IMR-90 (cell line): ENCODE measurements at regions of chr7 and their contacts with region 1.

Region 1: DNA sequence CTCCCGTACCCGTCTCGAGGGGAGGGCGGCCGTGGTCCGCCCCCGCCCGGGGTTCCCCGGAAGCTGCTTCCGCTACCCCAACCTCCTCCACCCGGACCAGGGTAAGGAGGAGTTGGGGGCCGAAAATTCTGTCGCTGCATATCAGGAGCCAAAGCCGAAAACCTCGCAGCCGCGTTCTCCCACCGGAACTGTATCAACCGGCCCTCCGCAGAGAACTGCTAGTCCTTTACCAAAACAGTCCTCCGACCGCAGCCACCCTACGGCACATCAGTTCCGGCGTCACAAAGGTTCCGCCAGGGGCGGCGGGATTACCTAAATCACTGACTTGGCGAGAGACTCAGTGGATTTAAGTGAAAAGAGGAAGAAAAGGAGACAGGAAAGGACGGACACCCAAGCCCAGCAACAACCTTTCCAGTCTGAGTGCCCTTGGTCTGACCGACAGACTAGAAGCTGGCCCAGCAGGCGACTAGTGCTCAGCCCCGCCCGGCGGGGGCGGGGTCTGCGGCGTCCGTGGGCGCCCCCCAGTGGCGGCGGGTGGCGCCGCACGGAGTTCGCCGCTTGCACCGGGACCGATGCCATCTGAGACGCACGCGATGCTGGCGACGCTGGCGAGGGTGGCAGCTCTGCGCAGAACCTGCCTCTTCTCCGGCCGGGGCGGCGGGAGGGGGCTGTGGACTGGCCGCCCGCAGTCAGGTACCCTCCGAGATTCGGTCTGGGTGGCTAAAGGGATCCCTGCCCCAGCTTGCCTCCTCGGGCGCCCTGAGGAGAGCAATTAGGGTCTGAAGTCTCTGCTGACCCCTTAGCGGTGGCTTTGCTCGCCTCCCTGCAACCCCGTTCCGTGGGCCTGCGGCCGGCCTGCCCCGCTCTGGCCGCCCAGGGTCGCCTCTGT is at the starts of genes MPLKIP and SUGCT:
- DNase-seq: peak; percentile 87
- ATAC-seq: peak; percentile 94
- H3K4me3 ChIP-seq: peak within 1 kb of the TSS; percentile 87
- H3K27ac ChIP-seq: peak within 1 kb of the TSS; percentile 87
- H3K4me1 ChIP-seq: no peaks in the 10 kb centered on the region
- H3K27me3 ChIP-seq: no peaks in the 10 kb centered on the region
- CTCF ChIP-seq: peak; percentile 97
- POLR2A ChIP-seq: peak; percentile 59; the same call in 1 of the 2 replicates
- RAD21 ChIP-seq: peak; percentile 41; the same call in 1 of the 2 replicates
- total RNA-seq, gene MPLKIP: 12.7 and 13.9 TPM in 2 replicates
- total RNA-seq, gene SUGCT: 5.9 and 7.5 TPM in 2 replicates

Region 2: GRCh38 chr7:39894904-39895303 is 239.8 kb before region 1 on chr7:
- CTCF ChIA-PET with region 1: interaction called, 5 read pairs
- POLR2A ChIA-PET with region 1: no interaction called
- dilution Hi-C with region 1: no loop called
- in situ Hi-C with region 1: no loop called
- intact Hi-C with region 1: loop called (anchors 2 kb)
- DNase-seq: peak; percentile 13
- ATAC-seq: 0 out of 2 replicates have a peak, but pooled peaks have one; percentile 24
- H3K4me3 ChIP-seq: no peak overlapping the region
- H3K27ac ChIP-seq: no peak overlapping the region
- H3K4me1 ChIP-seq: no peaks in the 10 kb centered on the region
- H3K27me3 ChIP-seq: peaks cover 51% of the 10 kb centered on the region
- CTCF ChIP-seq: no peak
- POLR2A ChIP-seq: no peak
- RAD21 ChIP-seq: no peak

Region 3: GRCh38 chr7:39904077-39904486 is 230.6 kb before region 1 on chr7:
- CTCF ChIA-PET with region 1: no interaction called
- POLR2A ChIA-PET with region 1: interaction called, 12 read pairs
- dilution Hi-C with region 1: no loop called
- in situ Hi-C with region 1: no loop called
- intact Hi-C with region 1: no loop called
- DNase-seq: peak; percentile 6
- ATAC-seq: no peak
- H3K4me3 ChIP-seq: no peak overlapping the region
- H3K27ac ChIP-seq: no peak overlapping the region
- H3K4me1 ChIP-seq: no peaks in the 10 kb centered on the region
- H3K27me3 ChIP-seq: peaks cover 14% of the 10 kb centered on the region
- CTCF ChIP-seq: no peak
- POLR2A ChIP-seq: no peak
- RAD21 ChIP-seq: no peak

Region 4: GRCh38 chr7:40221836-40222235 is 87.2 kb after region 1 on chr7:
- CTCF ChIA-PET with region 1: no interaction called
- POLR2A ChIA-PET with region 1: interaction called, 3 read pairs
- dilution Hi-C with region 1: no loop called
- in situ Hi-C with region 1: no loop called
- intact Hi-C with region 1: loop called (anchors 2 kb)
- DNase-seq: peak; percentile 92
- ATAC-seq: peak; percentile 92
- H3K4me3 ChIP-seq: no peak overlapping the region
- H3K27ac ChIP-seq: peak overlapping the region; percentile 85
- H3K4me1 ChIP-seq: peaks cover 16% of the 10 kb centered on the region
- H3K27me3 ChIP-seq: no peaks in the 10 kb centered on the region
- CTCF ChIP-seq: no peak
- POLR2A ChIP-seq: no peak
- RAD21 ChIP-seq: no peak